Right cardiac atrium (tissue), 5 donors: ENCODE measurements at regions of chr2 and their contacts with region 1.

Region 1: DNA sequence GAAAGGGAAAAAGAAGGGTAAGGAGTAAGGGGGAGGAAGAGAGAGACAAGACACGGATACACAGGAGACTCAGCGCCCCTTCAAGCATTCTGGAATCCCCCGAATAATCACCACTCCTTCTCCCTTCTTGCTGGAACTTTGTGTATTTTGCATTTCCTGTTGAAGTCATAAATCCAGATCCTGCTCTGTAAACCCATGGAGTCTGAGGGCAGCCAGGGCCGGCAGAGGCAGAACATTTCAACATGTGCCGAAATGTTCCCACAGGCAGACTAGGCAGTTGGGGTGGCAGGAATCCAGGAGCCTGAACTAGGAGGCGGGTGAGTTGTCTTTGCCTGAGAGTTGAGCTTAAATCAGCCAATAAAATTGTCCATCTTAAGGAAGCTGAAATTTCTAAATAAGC is 193.1 kb downstream of the SH3RF3 start:
- DNase-seq: peak; percentile 92 to 96 (median 93)
- ATAC-seq: peak; percentile 77 to 81
- H3K4me3 ChIP-seq: no peak overlapping the region
- H3K27ac ChIP-seq: peak overlapping the region; percentile 93
- H3K4me1 ChIP-seq: peaks cover 45% of the 10 kb centered on the region
- H3K27me3 ChIP-seq: no peaks in the 10 kb centered on the region

Region 2: DNA sequence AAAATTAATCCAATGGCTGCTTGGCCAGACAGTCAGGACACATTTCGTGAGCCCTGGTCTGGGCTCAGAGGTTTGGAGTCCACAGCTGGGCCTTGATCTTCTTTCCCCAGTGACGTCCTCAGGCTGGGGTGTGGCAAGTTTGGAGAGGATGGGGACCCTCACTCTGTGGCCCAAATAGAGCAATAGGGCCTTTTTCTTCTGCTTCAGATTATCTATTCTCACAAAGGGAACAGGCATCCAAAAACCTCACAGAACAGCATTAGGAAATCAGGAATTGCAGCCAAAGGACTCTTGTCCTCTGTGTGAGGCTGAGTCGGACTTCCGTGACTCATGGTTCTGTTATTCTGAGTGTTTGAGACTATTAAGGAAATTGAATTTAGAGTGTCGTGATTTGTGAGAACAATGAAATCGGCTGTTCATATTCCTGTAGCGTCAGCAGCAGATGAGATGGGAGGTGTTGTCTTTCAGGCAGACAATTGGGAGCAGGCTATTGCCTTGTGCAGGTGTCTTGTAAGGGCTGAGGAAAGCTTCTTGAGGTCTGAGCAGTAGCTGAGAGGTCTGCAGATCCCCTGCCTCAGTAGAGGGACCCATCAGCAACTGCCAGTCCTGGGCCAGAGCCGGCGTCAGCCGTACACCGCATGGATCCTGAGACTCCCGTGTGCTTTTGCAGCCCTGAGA is 79.3 kb before region 1 on chr2:
- intact Hi-C with region 1: loop called in 1 of 4 experiments (anchors 10 kb)
- DNase-seq: peak; percentile 58 to 85 (median 65)
- ATAC-seq: peak; percentile 66 to 81
- H3K4me3 ChIP-seq: no peak overlapping the region
- H3K27ac ChIP-seq: peak overlapping the region; percentile 98
- H3K4me1 ChIP-seq: peaks cover 52% of the 10 kb centered on the region
- H3K27me3 ChIP-seq: no peaks in the 10 kb centered on the region

Region 3: DNA sequence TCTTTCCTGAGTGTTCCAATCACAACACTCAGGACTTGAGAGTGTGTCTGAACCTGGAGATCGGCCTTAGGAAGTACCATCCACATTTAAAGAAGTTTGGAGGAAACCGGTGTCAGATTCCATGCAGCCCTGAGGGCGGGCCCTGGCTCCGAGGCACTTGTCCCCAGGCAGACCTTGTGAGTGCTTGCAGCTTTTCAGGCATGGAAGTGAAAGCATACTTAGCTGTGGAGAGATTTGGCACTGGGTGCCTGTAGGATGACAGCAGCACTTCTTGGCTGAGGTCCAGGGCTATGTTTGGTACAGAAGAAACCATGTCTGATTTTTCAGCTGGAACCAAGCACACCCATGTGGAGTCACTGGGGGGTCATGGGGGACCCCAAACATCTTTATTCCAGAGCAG is 60.8 kb after region 1 on chr2:
- intact Hi-C with region 1: loop called in 1 of 4 experiments (anchors 10 kb)
- DNase-seq: peak; percentile 74 to 88 (median 83)
- ATAC-seq: peak; percentile 90 to 95
- H3K4me3 ChIP-seq: no peak overlapping the region
- H3K27ac ChIP-seq: peak overlapping the region; percentile 8
- H3K4me1 ChIP-seq: peaks cover 10% of the 10 kb centered on the region
- H3K27me3 ChIP-seq: no peaks in the 10 kb centered on the region

Region 4: GRCh38 chr2:109429233-109430095 is 107.4 kb after region 1 on chr2:
- intact Hi-C with region 1: no loop called
- DNase-seq: no peak
- ATAC-seq: peak in 1 of 2 donors; percentile 22
- H3K4me3 ChIP-seq: no peak overlapping the region
- H3K27ac ChIP-seq: no peak overlapping the region
- H3K4me1 ChIP-seq: no peaks in the 10 kb centered on the region
- H3K27me3 ChIP-seq: no peaks in the 10 kb centered on the region